Body of pancreas (tissue), 4 donors: ENCODE measurements at regions of chr20 and their contacts with region 1.

Region 1: GRCh38 chr20:354298-355064 is 7.6 kb downstream of the NRSN2 start:
- DNase-seq: peak; percentile 74 to 78 (median 76)
- ATAC-seq: peak; percentile 96
- H3K4me3 ChIP-seq: no peak overlapping the region
- H3K27ac ChIP-seq: no peak overlapping the region
- H3K4me1 ChIP-seq: peaks cover 8% of the 10 kb centered on the region
- H3K27me3 ChIP-seq: no peaks in the 10 kb centered on the region
- CTCF ChIP-seq: peak; percentile 88 to 97 (median 96)
- POLR2A ChIP-seq: no peak

Region 2: DNA sequence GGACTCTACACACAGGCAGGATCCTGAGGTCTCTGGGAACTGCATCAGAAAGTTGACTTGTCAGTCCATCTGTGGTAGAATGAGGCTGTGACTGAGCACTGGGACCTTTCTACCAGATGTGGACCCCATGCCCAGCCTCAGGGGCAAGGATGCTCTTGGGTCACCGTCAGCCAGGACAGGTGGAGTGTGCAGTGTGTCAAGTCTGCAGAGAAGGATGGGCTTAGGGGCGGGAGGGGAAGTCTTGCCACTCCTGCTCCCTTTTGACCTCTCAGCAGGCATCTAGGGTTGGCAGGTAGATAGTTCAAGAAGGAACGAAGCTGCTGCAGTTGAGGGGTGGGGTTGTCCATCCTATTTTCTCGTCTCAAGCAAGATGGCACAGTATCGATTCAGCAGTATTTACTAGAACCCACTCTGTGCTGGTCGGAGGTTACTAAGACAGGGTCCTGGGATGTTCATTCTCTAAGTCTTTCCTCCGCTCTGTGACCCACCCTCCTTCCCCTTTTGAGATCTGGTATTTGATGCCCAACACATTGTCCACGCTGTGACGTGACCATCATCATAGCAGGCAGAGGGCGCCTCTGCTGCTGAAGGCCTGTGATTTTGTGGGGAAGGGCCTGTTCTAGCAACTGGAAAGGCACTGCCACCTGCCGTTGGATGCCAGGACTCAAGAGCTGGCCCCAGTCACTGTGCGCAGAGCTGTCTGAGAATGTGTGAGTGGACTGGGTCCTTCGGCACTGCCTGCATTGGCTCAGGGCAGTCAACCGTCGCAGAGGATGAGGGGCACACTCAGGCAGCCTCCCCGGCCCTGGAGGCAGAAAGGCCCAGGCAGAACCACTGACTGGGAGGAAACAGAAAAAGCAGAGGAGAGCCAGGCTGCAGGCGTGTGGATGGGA is 76.8 kb after region 1 on chr20:
- intact Hi-C with region 1: loop called (anchors 10 kb)
- DNase-seq: peak; percentile 71 to 86 (median 82)
- ATAC-seq: peak; percentile 83
- H3K4me3 ChIP-seq: no peak overlapping the region
- H3K27ac ChIP-seq: no peak overlapping the region
- H3K4me1 ChIP-seq: no peaks in the 10 kb centered on the region
- H3K27me3 ChIP-seq: no peaks in the 10 kb centered on the region
- CTCF ChIP-seq: peak; percentile 52 to 97 (median 87)
- POLR2A ChIP-seq: no peak

Region 3: DNA sequence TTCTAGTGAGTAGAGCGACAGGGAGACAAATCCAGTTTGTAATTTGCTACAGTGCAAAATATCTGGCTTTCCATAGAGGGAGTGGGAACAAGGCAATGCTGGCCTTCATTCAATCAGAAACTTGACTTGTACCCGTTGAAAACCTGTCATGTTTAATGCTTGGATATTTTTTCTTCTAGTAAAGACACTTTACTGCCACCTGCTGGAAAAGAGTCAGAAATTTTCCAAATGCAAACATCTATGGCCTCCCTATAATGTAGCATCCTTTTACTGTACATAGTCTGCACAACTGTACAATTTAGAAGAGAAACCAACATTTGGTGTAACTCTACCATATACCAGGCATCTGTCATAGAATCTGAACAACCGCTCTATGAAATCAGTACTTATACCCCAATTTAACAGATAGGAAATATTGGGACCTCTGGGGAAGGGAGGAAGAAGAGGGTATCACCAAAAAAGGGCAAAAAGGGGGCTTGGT is 124.5 kb after region 1 on chr20:
- intact Hi-C with region 1: loop called (anchors 10 kb)
- DNase-seq: peak in 1 of 4 donors; percentile 50
- ATAC-seq: peak; percentile 45
- H3K4me3 ChIP-seq: no peak overlapping the region
- H3K27ac ChIP-seq: no peak overlapping the region
- H3K4me1 ChIP-seq: peaks cover 12% of the 10 kb centered on the region
- H3K27me3 ChIP-seq: no peaks in the 10 kb centered on the region
- CTCF ChIP-seq: peak; percentile 29 to 65 (median 57)
- POLR2A ChIP-seq: no peak

Region 4: GRCh38 chr20:1588533-1589460 is 1234.3 kb after region 1 on chr20:
- intact Hi-C with region 1: no loop called
- DNase-seq: peak in 1 of 4 donors; percentile 55
- ATAC-seq: no peak
- H3K4me3 ChIP-seq: no peak overlapping the region
- H3K27ac ChIP-seq: peak overlapping the region in 1 of 4 donors; percentile 56
- H3K4me1 ChIP-seq: no peaks in the 10 kb centered on the region
- H3K27me3 ChIP-seq: no peaks in the 10 kb centered on the region
- CTCF ChIP-seq: no peak
- POLR2A ChIP-seq: peak in 1 of 3 donors; percentile 18